ENCODE measurements at regions of chr12 and their contacts with region 1.

Region 1: GRCh38 chr12:18250313-18250916 is 10.9 kb upstream of the PIK3C2G start:
- DNase-seq: peak; percentile 75
- ATAC-seq: peak; percentile 24; the same call in 1 of the 2 replicates
- H3K4me3 ChIP-seq: no peak overlapping the region
- H3K27ac ChIP-seq: no peak overlapping the region
- H3K4me1 ChIP-seq: no peaks in the 10 kb centered on the region
- H3K27me3 ChIP-seq: no peaks in the 10 kb centered on the region
- CTCF ChIP-seq: peak; percentile 72

Region 2: GRCh38 chr12:18054925-18055324 is 195.5 kb before region 1 on chr12:
- CTCF ChIA-PET with region 1: no interaction called
- POLR2A ChIA-PET with region 1: no interaction called
- intact Hi-C with region 1: no loop called
- DNase-seq: no peak
- ATAC-seq: no peak
- H3K4me3 ChIP-seq: no peak overlapping the region
- H3K27ac ChIP-seq: no peak overlapping the region
- H3K4me1 ChIP-seq: no peaks in the 10 kb centered on the region
- H3K27me3 ChIP-seq: no peaks in the 10 kb centered on the region
- CTCF ChIP-seq: no peak

Region 3: DNA sequence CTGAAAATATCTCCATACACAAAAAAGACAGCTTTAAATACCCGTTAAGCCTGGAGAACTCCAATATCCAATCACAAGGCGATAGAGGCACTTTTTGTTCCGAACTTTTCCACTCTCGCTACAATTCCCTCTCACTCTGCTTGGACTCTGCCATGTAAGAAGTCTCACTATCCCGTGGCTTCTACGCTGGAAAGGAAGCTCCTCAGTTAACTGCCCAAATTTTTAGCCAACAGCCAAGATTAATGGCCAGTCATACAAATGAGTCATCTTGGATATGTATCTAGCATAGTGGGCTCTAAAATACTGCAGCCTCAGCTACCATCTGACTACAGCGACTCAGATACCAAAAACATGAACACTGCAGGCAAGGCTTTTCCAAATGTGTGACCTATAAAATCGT is 114.9 kb before region 1 on chr12:
- CTCF ChIA-PET with region 1: no interaction called
- POLR2A ChIA-PET with region 1: no interaction called
- intact Hi-C with region 1: no loop called
- DNase-seq: peak; percentile 36
- ATAC-seq: peak; percentile 48; the same call in 1 of the 2 replicates
- H3K4me3 ChIP-seq: no peak overlapping the region
- H3K27ac ChIP-seq: no peak overlapping the region
- H3K4me1 ChIP-seq: peaks cover 3% of the 10 kb centered on the region; the same call in 1 of the 2 replicates
- H3K27me3 ChIP-seq: no peaks in the 10 kb centered on the region
- CTCF ChIP-seq: no peak

Region 4: DNA sequence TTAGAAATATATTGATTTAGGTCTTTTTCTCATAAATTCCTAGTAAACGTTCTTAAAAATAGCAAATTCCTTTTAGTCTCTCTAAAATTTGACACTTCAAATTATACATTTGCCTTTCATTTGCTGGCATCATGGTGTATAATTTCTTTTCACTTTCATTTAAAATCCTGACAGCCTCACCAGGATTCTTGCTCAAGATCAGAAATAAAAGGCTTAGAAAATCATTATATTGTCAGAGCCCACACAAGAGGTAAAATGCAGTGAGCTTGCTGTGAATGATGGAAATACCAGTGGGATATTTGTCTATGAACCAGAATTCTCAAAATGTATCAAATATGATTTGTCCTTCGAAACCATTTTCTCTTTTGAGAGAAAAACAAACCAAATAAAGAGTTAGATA is 67.3 kb before region 1 on chr12:
- CTCF ChIA-PET with region 1: no interaction called
- POLR2A ChIA-PET with region 1: no interaction called
- intact Hi-C with region 1: no loop called
- DNase-seq: no peak
- ATAC-seq: no peak
- H3K4me3 ChIP-seq: no peak overlapping the region
- H3K27ac ChIP-seq: no peak overlapping the region
- H3K4me1 ChIP-seq: no peaks in the 10 kb centered on the region
- H3K27me3 ChIP-seq: no peaks in the 10 kb centered on the region
- CTCF ChIP-seq: no peak

Region 5: DNA sequence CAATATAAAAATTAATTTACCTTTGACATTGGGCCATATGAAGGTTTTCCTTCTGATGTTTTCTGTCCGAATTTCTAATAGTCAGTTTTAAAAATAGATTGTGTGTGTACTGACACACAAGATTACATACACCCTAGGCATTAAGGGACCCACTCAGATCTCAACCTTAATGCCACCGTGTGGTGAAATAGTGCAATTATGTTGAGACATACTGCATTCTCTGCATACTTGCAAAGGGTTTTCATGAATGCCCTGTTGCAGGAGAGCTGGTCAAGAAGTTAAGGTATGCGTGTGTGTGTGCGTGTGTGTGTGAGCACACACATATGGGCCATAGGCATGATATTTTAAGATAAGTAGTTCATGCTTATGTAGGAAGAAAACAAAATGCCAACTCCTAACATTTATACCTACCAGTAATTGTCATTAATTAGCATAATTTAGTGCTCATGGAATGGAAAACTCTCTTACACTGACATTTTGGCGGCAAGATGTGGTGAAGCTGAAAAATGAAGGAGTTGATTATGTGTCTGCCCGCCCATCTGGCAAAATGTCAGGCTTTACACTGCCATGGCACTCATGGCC is 69.7 kb after region 1 on chr12:
- CTCF ChIA-PET with region 1: interaction called, 7 read pairs
- POLR2A ChIA-PET with region 1: no interaction called
- intact Hi-C with region 1: loop called (anchors 1 kb)
- DNase-seq: peak; percentile 79
- ATAC-seq: peak; percentile 92
- H3K4me3 ChIP-seq: no peak overlapping the region
- H3K27ac ChIP-seq: no peak overlapping the region
- H3K4me1 ChIP-seq: 0 out of 2 replicates have a peak, but pooled peaks cover 9% of the 10 kb centered on the region
- H3K27me3 ChIP-seq: no peaks in the 10 kb centered on the region
- CTCF ChIP-seq: peak; percentile 71